AG04449 (cell line): ENCODE measurements at regions of chr11 and their contacts with region 1.

Region 1: DNA sequence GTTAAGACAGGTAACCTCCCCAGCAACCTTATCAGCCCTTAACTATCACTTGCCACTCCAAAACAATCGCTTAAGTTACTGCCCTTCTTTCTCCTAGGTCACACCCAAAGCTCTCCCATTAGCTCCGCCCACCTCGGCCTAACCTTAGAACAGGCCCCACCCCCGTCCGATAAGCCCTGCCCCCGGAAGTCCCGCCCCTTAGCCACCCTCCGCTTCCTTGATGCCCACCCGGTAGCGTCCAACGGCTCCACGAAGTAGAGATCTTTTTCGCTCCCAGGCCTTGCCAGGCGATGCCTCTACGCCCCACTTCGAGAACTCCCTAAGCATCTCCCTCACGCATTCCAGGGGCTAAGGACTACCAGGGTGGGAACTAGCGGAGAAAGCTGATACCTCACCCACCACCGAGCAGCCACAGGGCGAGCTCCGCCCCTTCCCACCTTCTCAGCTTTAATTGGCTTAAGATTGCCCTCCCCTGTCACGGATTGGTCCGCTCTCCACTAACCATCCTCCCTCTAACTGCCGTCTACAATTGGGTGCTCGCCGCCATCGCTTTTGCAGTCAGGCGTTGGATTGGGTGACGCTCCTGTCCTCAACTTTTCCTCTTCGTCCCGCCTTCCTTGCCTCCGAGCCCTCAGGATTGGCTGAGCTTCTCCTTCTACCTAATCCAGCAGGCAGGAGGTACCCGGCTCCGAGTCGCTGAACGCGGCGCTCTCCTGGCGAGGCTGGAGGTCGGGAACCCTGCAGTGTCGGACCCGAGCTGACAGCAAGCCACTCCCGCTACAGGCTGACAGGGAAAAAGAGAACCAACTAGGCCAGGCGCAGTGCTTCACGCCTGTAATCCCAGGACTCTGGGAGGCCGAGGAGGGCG is at the start of gene ZBTB3:
- DNase-seq: peak; percentile 93
- H3K4me3 ChIP-seq: peak within 1 kb of the TSS; percentile 75
- CTCF ChIP-seq: no peak

Region 2: DNA sequence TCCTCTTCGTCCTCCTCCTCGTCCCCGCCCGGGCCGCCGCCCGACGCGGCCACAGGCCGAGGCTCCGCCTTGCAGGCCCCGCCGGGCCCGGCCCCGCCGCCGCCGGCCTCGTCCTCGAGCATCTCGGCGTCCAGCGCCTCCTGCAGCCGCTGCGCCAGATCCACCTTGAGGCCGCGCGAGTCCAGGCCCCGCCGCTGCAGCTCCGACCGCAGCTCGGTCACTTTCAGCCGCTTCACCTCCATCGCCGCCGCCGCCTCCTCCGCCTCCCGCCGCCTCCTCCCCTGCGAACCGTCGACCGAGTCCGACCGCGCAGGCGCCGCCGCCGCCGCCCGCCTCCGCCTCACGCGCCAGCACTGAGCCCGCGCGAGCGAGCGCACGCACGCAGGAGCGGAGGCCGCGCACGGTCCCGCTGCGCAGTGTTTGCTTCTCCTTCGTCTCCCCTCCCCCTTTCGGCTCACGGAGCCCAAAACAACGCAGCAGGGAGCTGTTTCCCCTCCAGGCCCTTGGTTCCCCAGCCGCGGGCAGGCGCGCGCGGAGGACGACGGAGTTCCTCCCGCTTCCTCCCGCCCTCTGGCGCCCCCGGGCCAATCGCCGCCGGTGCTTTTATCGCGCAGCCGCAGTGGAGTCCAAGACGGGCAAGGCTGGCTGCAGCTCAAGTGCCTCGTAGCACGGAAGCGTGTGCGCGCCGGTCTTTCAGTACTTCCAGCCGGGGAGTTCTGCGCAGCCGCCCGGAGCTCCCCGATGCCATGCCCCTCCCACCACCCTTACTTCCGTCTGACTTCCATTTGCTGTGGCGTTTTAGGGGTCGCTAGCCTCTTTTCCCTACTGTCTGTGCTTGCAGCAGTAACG is 26.8 kb before region 1 on chr11 and contains the start of gene HNRNPUL2:
- CTCF ChIA-PET with region 1: interaction called, 3 read pairs
- POLR2A ChIA-PET with region 1: interaction called, 18 read pairs
- DNase-seq: peak; percentile 92
- H3K4me3 ChIP-seq: peak within 1 kb of the TSS; percentile 96
- CTCF ChIP-seq: peak; percentile 4

Region 3: GRCh38 chr11:62771144-62772021 is 17.4 kb after region 1 on chr11 and contains the start of gene TAF6L:
- CTCF ChIA-PET with region 1: interaction called, 7 read pairs
- POLR2A ChIA-PET with region 1: interaction called, 10 read pairs
- DNase-seq: peak; percentile 71
- H3K4me3 ChIP-seq: peak within 1 kb of the TSS; percentile 86
- CTCF ChIP-seq: no peak

Region 4: GRCh38 chr11:62847767-62848314 is 93.9 kb after region 1 on chr11:
- CTCF ChIA-PET with region 1: no interaction called
- POLR2A ChIA-PET with region 1: no interaction called
- DNase-seq: no peak
- H3K4me3 ChIP-seq: no peak overlapping the region
- CTCF ChIP-seq: no peak